ENCODE measurements at regions of chr10 and their contacts with region 1.

Region 1: GRCh38 chr10:18214691-18215563 is 74.7 kb downstream of the CACNB2 start:
- DNase-seq: peak; percentile 71
- H3K4me3 Mint-ChIP-seq: no peak overlapping the region
- H3K27ac Mint-ChIP-seq: no peak overlapping the region
- H3K4me1 Mint-ChIP-seq: no peaks in the 10 kb centered on the region
- H3K27me3 Mint-ChIP-seq: no peaks in the 10 kb centered on the region
- CTCF ChIP-seq: peak; percentile 90

Region 2: GRCh38 chr10:17742918-17743317 is 472.0 kb before region 1 on chr10:
- CTCF ChIA-PET with region 1: interaction called, 8 read pairs
- POLR2A ChIA-PET with region 1: interaction called, 4 read pairs
- intact Hi-C with region 1: loop called (anchors 2 kb)
- DNase-seq: peak; percentile 62
- H3K4me3 Mint-ChIP-seq: no peak overlapping the region
- H3K27ac Mint-ChIP-seq: no peak overlapping the region
- H3K4me1 Mint-ChIP-seq: peaks cover 5% of the 10 kb centered on the region
- H3K27me3 Mint-ChIP-seq: no peaks in the 10 kb centered on the region
- CTCF ChIP-seq: peak; percentile 80

Region 3: GRCh38 chr10:17847585-17848296 is 367.2 kb before region 1 on chr10:
- CTCF ChIA-PET with region 1: interaction called, 198 read pairs
- POLR2A ChIA-PET with region 1: interaction called, 4 read pairs
- intact Hi-C with region 1: loop called (anchors 1 kb)
- DNase-seq: peak; percentile 35
- H3K4me3 Mint-ChIP-seq: no peak overlapping the region
- H3K27ac Mint-ChIP-seq: no peak overlapping the region
- H3K4me1 Mint-ChIP-seq: peaks cover 9% of the 10 kb centered on the region
- H3K27me3 Mint-ChIP-seq: no peaks in the 10 kb centered on the region
- CTCF ChIP-seq: peak; percentile 38

Region 4: GRCh38 chr10:18104223-18104872 is 110.6 kb before region 1 on chr10:
- CTCF ChIA-PET with region 1: interaction called, 10 read pairs
- POLR2A ChIA-PET with region 1: no interaction called
- intact Hi-C with region 1: loop called (anchors 2 kb)
- DNase-seq: peak; percentile 65
- H3K4me3 Mint-ChIP-seq: no peak overlapping the region
- H3K27ac Mint-ChIP-seq: no peak overlapping the region
- H3K4me1 Mint-ChIP-seq: peaks cover 6% of the 10 kb centered on the region
- H3K27me3 Mint-ChIP-seq: no peaks in the 10 kb centered on the region
- CTCF ChIP-seq: peak; percentile 69

Region 5: DNA sequence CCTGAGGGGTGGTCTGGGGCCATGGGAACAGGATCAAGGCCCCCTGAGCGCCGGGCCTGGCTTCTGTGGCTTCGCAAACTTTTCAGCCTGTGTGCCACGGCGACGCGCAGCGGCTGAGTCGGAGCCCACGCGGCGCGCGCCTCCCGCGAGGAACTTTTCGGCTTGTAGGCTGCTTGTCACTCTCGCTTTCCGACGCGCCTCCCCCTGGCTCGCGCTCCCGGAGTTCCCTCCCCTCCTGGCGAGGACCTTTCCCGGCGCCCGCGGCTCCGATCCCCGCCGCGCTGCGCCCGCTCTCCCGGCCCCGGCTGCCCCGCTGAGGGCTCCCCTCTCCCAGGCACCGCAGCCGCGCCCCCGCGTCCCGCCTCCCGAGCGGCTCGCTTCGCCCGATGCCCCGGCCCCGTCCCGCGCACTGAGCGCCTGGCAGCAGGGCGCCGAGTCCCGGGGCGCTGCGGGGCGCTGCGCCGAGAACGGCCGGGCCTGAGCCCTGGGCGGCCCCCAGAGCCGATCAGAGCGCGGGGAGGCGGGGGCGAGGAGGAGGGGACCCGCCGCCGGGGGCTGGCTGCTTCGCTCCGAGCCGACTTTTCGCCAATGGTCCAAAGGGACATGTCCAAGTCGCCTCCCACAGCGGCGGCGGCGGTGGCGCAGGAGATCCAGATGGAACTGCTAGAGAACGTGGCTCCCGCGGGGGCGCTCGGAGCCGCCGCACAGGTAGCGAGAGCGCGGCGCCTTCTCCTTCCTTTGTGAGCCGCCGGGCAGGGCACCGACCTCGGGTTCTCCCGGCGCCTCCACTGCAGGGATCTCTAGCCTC is 74.6 kb before region 1 on chr10 and contains the start of gene CACNB2:
- CTCF ChIA-PET with region 1: interaction called, 6 read pairs
- POLR2A ChIA-PET with region 1: interaction called, 4 read pairs
- intact Hi-C with region 1: loop called (anchors 2 kb)
- DNase-seq: peak; percentile 53
- H3K4me3 Mint-ChIP-seq: peak within 1 kb of the TSS; percentile 88
- H3K27ac Mint-ChIP-seq: no peak within 1 kb of the TSS
- H3K4me1 Mint-ChIP-seq: peaks cover 27% of the 10 kb centered on the region
- H3K27me3 Mint-ChIP-seq: no peaks in the 10 kb centered on the region
- CTCF ChIP-seq: no peak
- total RNA-seq, gene CACNB2: 2.7 and 3.3 TPM in 2 replicates

Region 6: GRCh38 chr10:18238870-18239485 is 24.1 kb after region 1 on chr10:
- CTCF ChIA-PET with region 1: interaction called, 10 read pairs
- POLR2A ChIA-PET with region 1: interaction called, 3 read pairs
- intact Hi-C with region 1: no loop called
- DNase-seq: peak; percentile 57
- H3K4me3 Mint-ChIP-seq: no peak overlapping the region
- H3K27ac Mint-ChIP-seq: no peak overlapping the region
- H3K4me1 Mint-ChIP-seq: peaks cover 18% of the 10 kb centered on the region
- H3K27me3 Mint-ChIP-seq: no peaks in the 10 kb centered on the region
- CTCF ChIP-seq: peak; percentile 59

Region 7: DNA sequence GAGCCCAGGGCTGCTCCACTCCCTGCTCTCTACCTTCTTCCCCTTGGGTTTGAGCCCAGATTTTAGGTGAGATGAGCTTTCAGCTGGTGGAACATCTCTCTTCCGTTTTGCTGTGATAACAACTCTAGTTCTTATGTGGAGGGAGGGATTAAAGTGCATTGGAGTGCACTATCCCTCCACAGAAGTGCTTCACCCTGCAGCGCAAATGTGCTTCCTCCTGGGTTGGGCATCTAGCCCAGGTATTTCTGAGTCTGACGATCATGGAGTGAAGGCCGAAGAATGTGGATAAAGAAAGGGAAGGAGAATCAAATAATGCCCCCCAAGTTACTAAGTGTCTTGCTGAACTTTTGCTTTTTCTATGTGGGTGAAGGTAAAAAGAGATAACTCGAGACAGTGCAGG is 82.7 kb after region 1 on chr10:
- CTCF ChIA-PET with region 1: no interaction called
- POLR2A ChIA-PET with region 1: no interaction called
- intact Hi-C with region 1: no loop called
- DNase-seq: no peak
- H3K4me3 Mint-ChIP-seq: no peak overlapping the region
- H3K27ac Mint-ChIP-seq: no peak overlapping the region
- H3K4me1 Mint-ChIP-seq: no peaks in the 10 kb centered on the region
- H3K27me3 Mint-ChIP-seq: no peaks in the 10 kb centered on the region
- CTCF ChIP-seq: no peak